Endothelial cell of umbilical vein (primary cell): ENCODE measurements at regions of chr10 and their contacts with region 1.

Region 1: GRCh38 chr10:97425964-97426775 is at the start of gene PGAM1:
- DNase-seq: peak; percentile 99
- H3K4me3 ChIP-seq: peak within 1 kb of the TSS; percentile 76 to 95 (median 86)
- H3K27ac ChIP-seq: peak within 1 kb of the TSS; percentile 79
- H3K4me1 ChIP-seq: peaks cover 27% of the 10 kb centered on the region
- H3K27me3 ChIP-seq: no peaks in the 10 kb centered on the region
- CTCF ChIP-seq: peak; percentile 66 to 91
- POLR2A ChIP-seq: no peak
- total RNA-seq, gene PGAM1: 357 and 375 TPM in 2 replicates

Region 2: GRCh38 chr10:97400665-97401454 is 25.3 kb before region 1 on chr10 and contains the start of gene RRP12:
- CTCF ChIA-PET with region 1: interaction called, 10 read pairs
- POLR2A ChIA-PET with region 1: no interaction called
- dilution Hi-C with region 1: no loop called
- intact Hi-C with region 1: no loop called
- DNase-seq: peak; percentile 97
- H3K4me3 ChIP-seq: peak within 1 kb of the TSS; percentile 54 to 84 (median 58)
- H3K27ac ChIP-seq: peak within 1 kb of the TSS; percentile 75
- H3K4me1 ChIP-seq: peaks cover 10% of the 10 kb centered on the region
- H3K27me3 ChIP-seq: no peaks in the 10 kb centered on the region
- CTCF ChIP-seq: peak in 1 of 2 donors; percentile 5
- POLR2A ChIP-seq: no peak
- total RNA-seq, gene RRP12: 35.8 and 40.9 TPM in 2 replicates

Region 3: DNA sequence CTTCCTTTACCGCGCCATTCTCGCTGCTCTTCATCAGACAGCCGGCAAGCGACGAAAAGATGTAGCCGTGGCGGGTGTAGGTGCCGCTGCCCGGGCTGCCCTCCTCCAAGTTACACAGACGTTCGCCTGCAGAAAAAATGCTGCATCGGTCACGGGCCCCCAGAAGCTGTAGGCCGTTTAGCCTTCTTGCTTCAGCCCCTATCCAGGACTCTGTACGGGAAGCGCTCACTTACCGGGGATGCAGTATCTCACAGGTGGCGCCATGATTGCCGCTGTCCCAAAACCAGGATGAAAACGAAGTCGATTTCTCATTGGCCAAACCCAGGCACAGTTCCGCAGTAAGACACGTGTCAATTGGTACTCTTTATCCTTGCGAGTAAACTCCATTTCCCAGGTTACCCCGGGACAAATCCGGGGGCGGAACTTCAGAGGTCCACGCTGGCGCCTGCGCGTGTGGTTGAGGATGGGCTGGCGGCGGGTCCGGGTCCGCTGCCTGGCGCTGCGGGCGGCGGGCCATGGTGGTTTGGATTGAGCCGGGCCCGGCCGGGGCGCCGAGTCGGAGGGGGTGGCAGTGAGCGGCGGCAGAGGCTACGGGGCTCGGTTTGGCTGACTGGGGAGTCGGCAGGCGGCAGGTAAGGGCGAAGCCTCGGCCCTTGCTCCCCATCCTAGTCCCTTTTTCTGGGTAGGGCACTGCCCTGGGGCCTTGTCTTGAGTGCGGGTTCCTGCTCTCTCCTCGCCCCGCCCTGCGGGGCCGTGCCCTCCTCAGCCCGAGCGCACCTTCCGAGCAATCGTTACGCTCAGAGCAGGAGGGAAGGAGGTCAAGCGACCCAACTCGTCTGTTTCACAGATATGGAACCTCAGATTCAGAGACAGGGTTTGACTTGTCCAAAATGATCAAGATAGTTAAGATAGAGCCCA is 19.8 kb after region 1 on chr10 and contains the starts of genes EXOSC1 and ZDHHC16:
- CTCF ChIA-PET with region 1: interaction called, 4 read pairs
- POLR2A ChIA-PET with region 1: no interaction called
- dilution Hi-C with region 1: no loop called
- intact Hi-C with region 1: loop called (anchors 1 kb)
- DNase-seq: peak; percentile 96
- H3K4me3 ChIP-seq: peak within 1 kb of the TSS; percentile 41 to 96 (median 87)
- H3K27ac ChIP-seq: peak within 1 kb of the TSS; percentile 61
- H3K4me1 ChIP-seq: peaks cover 18% of the 10 kb centered on the region
- H3K27me3 ChIP-seq: no peaks in the 10 kb centered on the region
- CTCF ChIP-seq: no peak
- POLR2A ChIP-seq: peak; percentile 84
- total RNA-seq, gene EXOSC1: 43.6 and 50.7 TPM in 2 replicates
- total RNA-seq, gene ZDHHC16: 52.0 and 53.2 TPM in 2 replicates